ENCODE measurements at regions of chr1 and their contacts with region 1.

Region 1: DNA sequence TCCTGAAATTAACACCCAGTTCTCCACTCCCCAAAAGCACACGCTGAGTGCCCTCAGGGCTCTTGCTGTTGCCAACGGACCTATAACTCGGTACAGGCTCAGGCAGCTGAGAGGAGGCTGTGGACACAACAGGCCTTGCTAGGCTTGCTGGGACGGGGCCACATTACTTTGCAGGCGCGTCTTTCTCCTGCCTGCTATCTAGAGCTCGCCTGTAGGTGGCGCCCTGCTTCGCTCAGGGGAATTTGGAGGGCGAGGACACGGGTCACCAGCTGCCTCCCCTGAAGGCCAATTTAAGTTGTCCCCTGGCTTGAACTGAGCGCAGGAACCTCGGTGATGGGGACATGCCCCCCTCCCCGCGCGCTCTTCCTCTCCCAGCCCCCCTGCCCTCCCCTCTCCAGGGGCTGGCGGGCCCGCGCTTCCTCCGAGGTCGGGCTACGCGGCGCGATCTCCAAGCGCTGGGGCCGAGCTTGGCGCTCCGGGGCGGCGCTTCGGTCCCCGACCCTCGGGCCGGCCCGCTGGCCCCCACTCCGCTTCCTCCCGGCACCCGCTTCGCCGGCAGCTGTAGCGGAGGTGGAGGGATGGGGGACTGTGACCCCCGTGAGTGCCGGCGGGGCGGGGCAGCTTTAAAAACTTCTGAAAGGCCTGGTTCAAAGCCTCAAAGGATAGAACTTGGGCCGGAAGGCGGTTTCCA is 32.4 kb upstream of the NFIA start:
- DNase-seq: peak; percentile 93
- ATAC-seq: peak; percentile 88
- H3K4me3 Mint-ChIP-seq: peak overlapping the region; percentile 69
- H3K27ac Mint-ChIP-seq: no peak overlapping the region
- H3K4me1 Mint-ChIP-seq: peaks cover 26% of the 10 kb centered on the region
- H3K27me3 Mint-ChIP-seq: peaks cover 38% of the 10 kb centered on the region
- CTCF ChIP-seq: peak; percentile 87

Region 2: DNA sequence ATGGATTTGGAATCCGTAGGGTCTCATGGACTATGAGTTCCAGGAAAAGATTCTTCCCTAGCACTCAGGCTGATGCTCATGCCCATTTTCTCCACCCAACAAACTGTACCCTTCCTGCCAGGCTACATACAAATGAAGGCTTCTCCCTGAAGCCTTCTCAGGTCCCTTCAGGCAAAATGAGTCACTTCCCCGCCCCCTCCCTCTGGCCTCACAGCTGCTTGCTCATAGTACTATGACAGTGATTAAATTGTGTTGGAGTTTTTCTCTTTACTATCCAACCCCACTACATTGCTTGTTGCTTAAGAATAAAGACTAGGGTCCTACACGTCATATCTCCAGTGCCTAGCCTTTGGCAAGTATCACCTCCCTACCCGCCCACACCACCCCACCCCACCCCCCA is 175.3 kb before region 1 on chr1:
- CTCF ChIA-PET with region 1: no interaction called
- POLR2A ChIA-PET with region 1: no interaction called
- intact Hi-C with region 1: no loop called
- DNase-seq: peak; percentile 55
- ATAC-seq: peak; percentile 60
- H3K4me3 Mint-ChIP-seq: no peak overlapping the region
- H3K27ac Mint-ChIP-seq: no peak overlapping the region
- H3K4me1 Mint-ChIP-seq: peaks cover 3% of the 10 kb centered on the region
- H3K27me3 Mint-ChIP-seq: peaks cover 5% of the 10 kb centered on the region
- CTCF ChIP-seq: no peak

Region 3: DNA sequence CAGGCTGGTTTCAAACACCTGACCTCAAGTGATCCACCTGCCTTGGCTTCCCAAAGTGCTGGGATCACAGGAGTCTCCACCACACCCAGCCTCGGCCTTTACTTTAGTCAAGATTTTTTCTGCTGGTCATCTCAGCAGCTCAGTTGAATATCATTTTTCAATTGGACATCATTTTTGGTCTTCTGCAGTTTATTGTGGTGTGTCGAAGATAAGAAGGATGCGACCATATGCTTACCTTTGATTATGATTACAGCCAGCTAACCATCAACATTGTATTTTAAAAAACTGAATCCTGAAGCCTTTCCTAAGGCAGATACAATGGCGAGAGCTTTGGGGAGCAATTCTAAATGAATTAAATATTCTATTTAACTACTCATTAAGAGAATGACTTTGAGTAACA is 20.1 kb after region 1 on chr1:
- CTCF ChIA-PET with region 1: interaction called, 11 read pairs
- POLR2A ChIA-PET with region 1: no interaction called
- intact Hi-C with region 1: no loop called
- DNase-seq: no peak
- ATAC-seq: no peak
- H3K4me3 Mint-ChIP-seq: no peak overlapping the region
- H3K27ac Mint-ChIP-seq: no peak overlapping the region
- H3K4me1 Mint-ChIP-seq: no peaks in the 10 kb centered on the region
- H3K27me3 Mint-ChIP-seq: no peaks in the 10 kb centered on the region
- CTCF ChIP-seq: no peak

Region 4: DNA sequence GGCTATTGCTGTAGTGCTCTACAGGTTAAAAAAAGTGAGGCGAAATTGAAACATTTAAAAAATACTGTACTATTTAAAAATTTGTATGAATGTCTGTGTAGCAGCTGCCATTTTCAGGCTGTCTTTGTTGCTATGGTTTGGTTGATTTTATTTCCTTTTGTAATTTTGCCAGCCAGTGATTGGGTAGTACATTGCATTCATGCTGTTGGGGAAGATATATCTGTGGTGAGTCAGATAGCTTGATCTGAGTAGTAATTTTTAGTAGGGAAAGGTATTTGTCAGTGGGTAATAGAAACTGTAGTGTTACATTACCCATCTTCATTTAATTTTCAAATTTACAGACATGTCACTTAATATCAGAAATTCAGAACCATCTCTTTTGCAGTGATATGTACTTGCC is 47.3 kb after region 1 on chr1:
- CTCF ChIA-PET with region 1: interaction called, 13 read pairs
- POLR2A ChIA-PET with region 1: no interaction called
- intact Hi-C with region 1: no loop called
- DNase-seq: no peak
- ATAC-seq: no peak
- H3K4me3 Mint-ChIP-seq: no peak overlapping the region
- H3K27ac Mint-ChIP-seq: no peak overlapping the region
- H3K4me1 Mint-ChIP-seq: peaks cover 13% of the 10 kb centered on the region
- H3K27me3 Mint-ChIP-seq: no peaks in the 10 kb centered on the region
- CTCF ChIP-seq: no peak

Region 5: DNA sequence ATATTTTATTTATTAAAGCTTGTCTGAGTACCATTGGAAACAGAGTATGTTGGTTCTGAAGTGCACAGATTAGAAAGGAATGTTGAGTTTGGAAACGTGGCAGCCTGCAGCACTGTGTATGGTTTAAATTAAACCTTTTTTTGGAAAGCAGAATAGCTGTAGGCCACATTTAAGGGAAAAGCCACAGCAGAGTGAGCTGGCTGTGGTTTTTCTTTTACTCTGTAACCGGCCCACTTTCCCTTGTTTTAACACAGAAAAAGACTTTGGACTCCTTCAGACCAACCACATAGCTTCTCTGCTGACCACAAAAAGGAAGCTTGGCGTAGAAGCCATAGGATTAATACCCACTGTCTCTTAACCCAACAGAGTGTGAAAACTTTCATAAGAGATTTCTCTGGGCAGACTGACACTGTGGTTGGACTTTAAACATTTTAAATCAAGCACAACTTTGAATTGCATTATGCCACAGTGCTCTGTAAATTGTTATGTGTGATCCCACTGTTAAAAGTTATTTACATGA is 107.5 kb after region 1 on chr1:
- CTCF ChIA-PET with region 1: interaction called, 11 read pairs
- POLR2A ChIA-PET with region 1: interaction called, 3 read pairs
- intact Hi-C with region 1: no loop called
- DNase-seq: peak; percentile 26
- ATAC-seq: peak; percentile 58
- H3K4me3 Mint-ChIP-seq: no peak overlapping the region
- H3K27ac Mint-ChIP-seq: no peak overlapping the region
- H3K4me1 Mint-ChIP-seq: peaks cover 25% of the 10 kb centered on the region
- H3K27me3 Mint-ChIP-seq: peaks cover 2% of the 10 kb centered on the region
- CTCF ChIP-seq: no peak

Region 6: GRCh38 chr1:61270761-61271411 is 220.9 kb after region 1 on chr1:
- CTCF ChIA-PET with region 1: interaction called, 10 read pairs
- POLR2A ChIA-PET with region 1: no interaction called
- intact Hi-C with region 1: no loop called
- DNase-seq: no peak
- ATAC-seq: peak; percentile 91
- H3K4me3 Mint-ChIP-seq: no peak overlapping the region
- H3K27ac Mint-ChIP-seq: peak overlapping the region; percentile 66
- H3K4me1 Mint-ChIP-seq: peaks cover 18% of the 10 kb centered on the region
- H3K27me3 Mint-ChIP-seq: no peaks in the 10 kb centered on the region
- CTCF ChIP-seq: no peak

Region 7: DNA sequence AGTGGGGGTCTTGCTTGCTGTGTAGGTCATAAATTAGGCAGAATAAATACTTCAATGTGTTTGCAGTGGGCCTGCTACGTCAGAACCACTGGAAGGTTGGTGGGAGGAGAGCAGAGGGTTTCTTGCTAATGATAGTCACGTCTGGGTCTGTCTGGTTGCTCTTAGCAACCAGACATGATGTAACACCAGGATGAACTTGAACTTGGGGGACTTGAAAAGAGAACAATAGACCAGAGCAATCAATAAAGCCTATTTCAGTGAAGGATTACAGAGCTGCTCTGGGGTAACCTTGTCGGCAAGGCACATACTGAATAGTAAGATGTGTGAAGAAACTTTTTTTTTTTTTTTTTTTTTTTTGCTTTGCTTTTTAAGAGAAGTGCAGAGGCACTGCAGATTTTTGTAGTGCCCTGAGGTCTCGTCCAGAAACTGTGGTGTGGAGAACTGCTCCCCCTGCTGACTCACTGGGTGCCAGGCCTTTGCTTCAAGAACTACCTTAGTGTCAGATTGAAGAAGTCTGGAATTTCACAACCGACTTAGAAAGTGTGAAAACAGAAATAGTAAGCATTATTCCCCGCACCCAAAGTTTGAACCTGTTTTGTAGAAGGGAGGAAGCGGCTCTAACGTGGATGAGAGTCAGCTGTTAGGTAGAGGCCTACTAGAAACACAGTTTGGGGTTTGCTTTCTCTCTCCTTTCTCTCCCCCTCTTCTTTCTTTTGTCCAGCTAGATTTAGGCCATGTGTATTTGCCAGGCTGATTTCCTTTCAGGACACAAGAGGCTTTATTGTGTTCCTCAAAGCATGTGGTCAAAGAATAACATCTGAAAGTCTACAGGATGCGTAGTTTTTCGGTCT is 403.3 kb after region 1 on chr1:
- CTCF ChIA-PET with region 1: interaction called, 33 read pairs
- POLR2A ChIA-PET with region 1: interaction called, 5 read pairs
- intact Hi-C with region 1: loop called (anchors 1 kb)
- DNase-seq: peak; percentile 85
- ATAC-seq: peak; percentile 89
- H3K4me3 Mint-ChIP-seq: peak overlapping the region; percentile 7
- H3K27ac Mint-ChIP-seq: no peak overlapping the region
- H3K4me1 Mint-ChIP-seq: peaks cover 8% of the 10 kb centered on the region
- H3K27me3 Mint-ChIP-seq: no peaks in the 10 kb centered on the region
- CTCF ChIP-seq: peak; percentile 68

Region 8: DNA sequence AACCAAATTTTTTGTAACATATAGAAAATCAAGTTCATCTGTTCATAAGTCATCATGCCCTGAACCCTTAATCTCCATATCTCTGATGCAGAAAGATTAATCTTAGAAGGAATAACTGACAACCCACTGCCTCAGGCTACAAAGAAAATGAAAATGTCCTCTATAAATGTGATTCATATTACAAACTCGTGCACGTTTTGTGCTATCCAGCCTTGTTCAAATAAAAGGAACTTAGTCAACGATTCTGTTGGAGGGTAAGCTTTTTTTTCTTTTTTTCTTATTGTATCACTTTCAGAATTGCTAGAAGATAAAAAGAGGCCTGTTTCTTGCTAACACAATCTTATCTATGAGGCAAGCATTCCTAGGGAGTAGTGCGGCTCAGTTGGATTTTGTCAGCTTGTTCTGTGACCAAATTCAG is 446.5 kb after region 1 on chr1:
- CTCF ChIA-PET with region 1: no interaction called
- POLR2A ChIA-PET with region 1: no interaction called
- intact Hi-C with region 1: no loop called
- DNase-seq: no peak
- ATAC-seq: no peak
- H3K4me3 Mint-ChIP-seq: no peak overlapping the region
- H3K27ac Mint-ChIP-seq: no peak overlapping the region
- H3K4me1 Mint-ChIP-seq: no peaks in the 10 kb centered on the region
- H3K27me3 Mint-ChIP-seq: no peaks in the 10 kb centered on the region
- CTCF ChIP-seq: no peak